HepG2 (cell line): ENCODE measurements at regions of chr1 and their contacts with region 1.

Region 1: DNA sequence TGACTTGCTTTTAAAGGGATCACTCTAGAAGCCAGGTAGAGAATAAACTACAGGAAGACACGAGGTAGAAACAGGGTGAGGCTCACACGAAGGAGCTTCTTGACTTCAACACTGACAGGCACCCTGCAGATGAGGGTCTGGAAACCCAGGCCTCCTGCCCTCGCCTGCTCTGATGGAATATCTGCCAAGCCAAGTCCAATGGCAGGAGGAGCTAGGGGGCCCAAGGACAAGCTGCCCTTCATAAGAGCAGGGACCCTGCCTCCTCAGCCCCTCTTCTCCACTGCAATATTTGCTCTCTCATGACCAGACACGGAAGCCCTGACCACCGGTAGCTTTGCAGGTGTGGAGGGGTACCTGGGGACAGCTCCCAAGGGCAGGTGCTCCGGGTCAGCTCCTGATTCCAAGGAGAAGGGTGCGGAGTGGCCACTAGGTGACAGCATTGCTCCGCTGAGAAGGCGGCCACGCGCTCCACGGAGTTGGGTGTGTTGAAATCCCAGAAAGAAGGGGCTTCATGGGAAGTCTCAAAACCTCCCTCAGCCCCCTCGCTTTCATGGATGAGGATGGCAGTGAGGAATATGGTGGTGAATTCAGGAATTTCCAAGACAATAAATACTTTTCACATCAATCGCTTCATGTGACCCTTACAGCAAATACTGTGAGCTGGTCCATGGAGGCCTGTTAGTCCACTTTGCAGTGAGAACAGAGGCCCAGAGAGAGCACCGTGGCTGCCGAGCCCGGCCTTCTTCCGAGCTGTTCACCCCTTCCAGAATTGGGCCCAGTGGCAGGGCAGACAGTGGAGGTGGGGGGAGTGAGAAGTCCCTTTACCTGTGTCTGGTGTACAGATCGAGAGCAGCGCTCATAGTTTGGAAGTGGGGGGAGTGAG is 33.2 kb upstream of the PAX7 start:
- DNase-seq: peak; percentile 18
- ATAC-seq: peak; percentile 94
- H3K4me3 ChIP-seq: no peak overlapping the region
- H3K27ac ChIP-seq: no peak overlapping the region
- H3K4me1 ChIP-seq: no peaks in the 10 kb centered on the region
- H3K27me3 ChIP-seq: peaks cover 0 to 10% of the 10 kb centered on the region in 2 experiments; a peak in 3 of 5 replicates
- CTCF ChIP-seq: peak; percentile 98
- EP300 ChIP-seq: no peak
- POLR2A ChIP-seq: no peak
- RAD21 ChIP-seq: peak; percentile 93

Region 2: DNA sequence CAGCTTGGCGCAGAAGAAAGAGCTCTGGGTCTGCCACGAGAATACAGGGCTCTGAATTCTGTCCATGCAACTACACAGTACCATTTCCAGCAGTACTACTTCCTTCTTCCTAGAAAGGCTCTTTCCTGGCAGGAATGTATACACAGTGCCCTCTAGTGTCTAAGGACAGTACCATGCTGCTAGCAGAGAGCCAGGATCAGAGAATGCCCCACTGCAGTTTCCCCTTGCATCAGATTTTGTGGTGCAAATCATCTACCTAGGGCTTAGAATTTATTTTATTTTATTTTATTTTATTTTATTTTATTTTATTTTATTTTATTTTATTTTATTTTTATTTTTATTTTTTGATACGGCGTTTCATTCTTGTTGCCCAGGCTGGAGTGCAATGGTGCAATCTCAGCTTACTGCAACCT is 84.0 kb after region 1 on chr1:
- CTCF ChIA-PET with region 1: interaction called, 24 read pairs
- POLR2A ChIA-PET with region 1: no interaction called
- in situ Hi-C with region 1: loop called (anchors 5 kb)
- intact Hi-C with region 1: loop called (anchors 1 kb)
- DNase-seq: peak; percentile 53
- ATAC-seq: peak; percentile 55; the same call in 2 of the 3 replicates
- H3K4me3 ChIP-seq: no peak overlapping the region
- H3K27ac ChIP-seq: no peak overlapping the region
- H3K4me1 ChIP-seq: peaks cover 9% of the 10 kb centered on the region
- H3K27me3 ChIP-seq: peaks cover 9 to 49% of the 10 kb centered on the region in 2 experiments; a peak in 4 of 5 replicates
- CTCF ChIP-seq: peak; percentile 68
- EP300 ChIP-seq: no peak
- POLR2A ChIP-seq: no peak
- RAD21 ChIP-seq: peak; percentile 54; the same call in 1 of the 2 replicates

Region 3: GRCh38 chr1:18820791-18821641 is 223.6 kb after region 1 on chr1:
- CTCF ChIA-PET with region 1: interaction called, 29 read pairs
- POLR2A ChIA-PET with region 1: no interaction called
- in situ Hi-C with region 1: loop called (anchors 5 kb)
- intact Hi-C with region 1: no loop called
- DNase-seq: peak; percentile 49
- ATAC-seq: peak; percentile 93
- H3K4me3 ChIP-seq: no peak overlapping the region
- H3K27ac ChIP-seq: no peak overlapping the region
- H3K4me1 ChIP-seq: no peaks in the 10 kb centered on the region
- H3K27me3 ChIP-seq: peaks cover 3 to 26% of the 10 kb centered on the region in 2 experiments; a peak in 2 of 5 replicates
- CTCF ChIP-seq: peak; percentile 96
- EP300 ChIP-seq: no peak
- POLR2A ChIP-seq: no peak
- RAD21 ChIP-seq: peak; percentile 85